H1 (cell line): ENCODE measurements at regions of chr17 and their contacts with region 1.

Region 1: GRCh38 chr17:65231662-65232335 is 94.6 kb downstream of the RGS9 start:
- DNase-seq: peak; percentile 70 to 77
- H3K4me3 ChIP-seq: no peak overlapping the region
- H3K27ac ChIP-seq: no peak overlapping the region
- H3K4me1 ChIP-seq: no peaks in the 10 kb centered on the region
- H3K27me3 ChIP-seq: no peaks in the 10 kb centered on the region
- CTCF ChIP-seq: peak; percentile 79 to 89 (median 80)
- EP300 ChIP-seq: no peak
- POLR2A ChIP-seq: no peak
- RAD21 ChIP-seq: peak; percentile 98 to 99

Region 2: GRCh38 chr17:65219124-65219523 is 12.7 kb before region 1 on chr17:
- CTCF ChIA-PET with region 1: interaction called, 37 read pairs
- POLR2A ChIA-PET with region 1: no interaction called
- DNase-seq: no peak
- H3K4me3 ChIP-seq: no peak overlapping the region
- H3K27ac ChIP-seq: no peak overlapping the region
- H3K4me1 ChIP-seq: peaks cover 0 to 3% (median 0%) of the 10 kb centered on the region in 4 experiments; a peak in 1 of 7 replicates
- H3K27me3 ChIP-seq: no peaks in the 10 kb centered on the region; a peak in 1 of 7 replicates
- CTCF ChIP-seq: peak in 2 of 3 experiments; percentile 12 to 15; a peak in 1 of 4 replicates
- EP300 ChIP-seq: no peak
- POLR2A ChIP-seq: no peak
- RAD21 ChIP-seq: peak in 1 of 2 experiments; percentile 40; a peak in 3 of 4 replicates

Region 3: GRCh38 chr17:65254168-65254567 is 22.4 kb after region 1 on chr17:
- CTCF ChIA-PET with region 1: interaction called, 10 read pairs
- POLR2A ChIA-PET with region 1: no interaction called
- DNase-seq: no peak
- H3K4me3 ChIP-seq: no peak overlapping the region
- H3K27ac ChIP-seq: no peak overlapping the region
- H3K4me1 ChIP-seq: no peaks in the 10 kb centered on the region
- H3K27me3 ChIP-seq: no peaks in the 10 kb centered on the region
- CTCF ChIP-seq: no peak
- EP300 ChIP-seq: no peak
- POLR2A ChIP-seq: no peak
- RAD21 ChIP-seq: no peak

Region 4: DNA sequence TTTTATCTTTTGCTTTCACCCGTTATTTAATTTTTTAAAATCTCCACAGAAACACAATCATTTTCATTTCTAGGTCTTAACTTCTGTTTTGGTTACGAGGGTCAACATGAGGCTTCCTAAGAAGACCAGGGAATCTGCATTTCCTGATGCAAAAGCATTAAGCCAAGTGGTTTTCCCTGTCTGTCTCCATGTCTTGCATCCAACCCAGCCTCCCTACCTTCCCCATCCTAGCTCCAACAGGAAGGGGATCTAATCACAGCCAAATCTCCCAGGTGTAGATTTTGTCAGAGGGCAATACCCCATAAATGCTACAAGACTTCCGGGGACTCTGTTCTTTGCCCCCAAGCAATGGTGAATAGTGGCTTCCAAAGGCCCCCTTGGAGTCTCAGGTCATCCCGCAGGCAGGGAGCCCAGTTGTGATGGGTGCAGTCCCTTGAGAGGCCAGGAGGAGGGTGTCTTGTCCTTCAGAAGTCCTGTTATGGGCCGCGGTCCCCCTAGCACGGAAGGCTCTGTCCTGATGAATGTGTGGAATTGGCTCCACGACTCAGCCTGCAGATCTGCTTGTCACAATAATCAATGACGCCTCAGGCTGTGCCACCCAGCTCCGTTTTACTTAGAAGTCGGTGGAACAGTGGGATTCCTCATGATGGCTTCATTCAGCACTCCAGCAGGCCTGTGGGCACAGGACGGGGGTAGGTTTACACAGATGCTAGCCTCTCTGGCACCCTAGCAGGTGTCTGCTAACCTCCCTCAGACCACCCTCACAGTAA is 46.4 kb after region 1 on chr17:
- CTCF ChIA-PET with region 1: interaction called, 17 read pairs
- POLR2A ChIA-PET with region 1: no interaction called
- DNase-seq: peak in 1 of 2 experiments; percentile 78
- H3K4me3 ChIP-seq: no peak overlapping the region
- H3K27ac ChIP-seq: no peak overlapping the region
- H3K4me1 ChIP-seq: peaks cover 0 to 6% (median 0%) of the 10 kb centered on the region in 4 experiments; a peak in 2 of 7 replicates
- H3K27me3 ChIP-seq: no peaks in the 10 kb centered on the region
- CTCF ChIP-seq: peak; percentile 84 to 92 (median 88)
- EP300 ChIP-seq: no peak
- POLR2A ChIP-seq: no peak
- RAD21 ChIP-seq: peak; percentile 96 to 97

Region 5: GRCh38 chr17:65988081-65988850 is 756.5 kb after region 1 on chr17:
- CTCF ChIA-PET with region 1: interaction called, 26 read pairs
- POLR2A ChIA-PET with region 1: no interaction called
- DNase-seq: no peak
- H3K4me3 ChIP-seq: no peak overlapping the region
- H3K27ac ChIP-seq: no peak overlapping the region
- H3K4me1 ChIP-seq: peaks cover 0 to 5% (median 0%) of the 10 kb centered on the region in 4 experiments; a peak in 1 of 7 replicates
- H3K27me3 ChIP-seq: no peaks in the 10 kb centered on the region
- CTCF ChIP-seq: peak in 2 of 3 experiments; percentile 73 to 79; a peak in 3 of 4 replicates
- EP300 ChIP-seq: no peak
- POLR2A ChIP-seq: no peak
- RAD21 ChIP-seq: peak; percentile 98 to 99